ENCODE measurements at regions of chr17 and their contacts with region 1.

Region 1: GRCh38 chr17:27793168-27793905 is 7.0 kb downstream of the NOS2 start:
- DNase-seq: no peak
- ATAC-seq: no peak
- H3K4me3 ChIP-seq: no peak overlapping the region
- H3K27ac ChIP-seq: no peak overlapping the region
- H3K4me1 ChIP-seq: peaks cover 0 to 11% of the 10 kb centered on the region in 2 experiments; a peak in 1 of 4 replicates
- H3K27me3 ChIP-seq: no peaks in the 10 kb centered on the region
- CTCF ChIP-seq: no peak
- POLR2A ChIP-seq: no peak
- RAD21 ChIP-seq: no peak

Region 2: GRCh38 chr17:27840688-27841087 is 47.4 kb after region 1 on chr17:
- CTCF ChIA-PET with region 1: no interaction called
- POLR2A ChIA-PET with region 1: no interaction called
- RAD21 ChIA-PET with region 1: no interaction called
- intact Hi-C with region 1: loop called (anchors 5 kb)
- DNase-seq: no peak
- ATAC-seq: no peak
- H3K4me3 ChIP-seq: no peak overlapping the region
- H3K27ac ChIP-seq: no peak overlapping the region
- H3K4me1 ChIP-seq: no peaks in the 10 kb centered on the region
- H3K27me3 ChIP-seq: no peaks in the 10 kb centered on the region
- CTCF ChIP-seq: no peak
- POLR2A ChIP-seq: no peak
- RAD21 ChIP-seq: no peak

Region 3: DNA sequence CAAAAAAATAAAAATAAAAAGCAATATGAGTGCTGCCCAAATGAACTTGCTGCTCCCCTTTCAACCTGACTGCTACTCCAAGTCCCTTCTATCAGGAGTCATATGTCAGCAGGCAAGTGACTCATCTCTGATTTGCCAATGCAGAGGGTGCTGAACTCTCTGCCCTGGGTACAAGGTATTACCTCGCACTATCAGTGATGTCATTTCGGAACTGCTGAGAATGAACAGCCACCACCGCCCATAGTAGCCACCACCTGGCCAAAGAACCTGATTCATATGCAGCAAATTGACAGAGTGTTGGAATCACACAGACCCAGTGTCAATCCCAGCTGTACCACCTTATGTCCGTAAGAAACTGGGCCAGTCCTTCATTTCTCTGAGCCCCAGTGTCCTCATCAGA is 68.7 kb after region 1 on chr17:
- CTCF ChIA-PET with region 1: no interaction called
- POLR2A ChIA-PET with region 1: no interaction called
- RAD21 ChIA-PET with region 1: no interaction called
- intact Hi-C with region 1: no loop called
- DNase-seq: no peak
- ATAC-seq: no peak
- H3K4me3 ChIP-seq: no peak overlapping the region
- H3K27ac ChIP-seq: no peak overlapping the region
- H3K4me1 ChIP-seq: no peaks in the 10 kb centered on the region
- H3K27me3 ChIP-seq: 0 out of 2 replicates have a peak, but pooled peaks cover 15% of the 10 kb centered on the region
- CTCF ChIP-seq: no peak
- POLR2A ChIP-seq: no peak
- RAD21 ChIP-seq: no peak

Region 4: GRCh38 chr17:27907976-27908558 is 114.7 kb after region 1 on chr17:
- CTCF ChIA-PET with region 1: no interaction called
- POLR2A ChIA-PET with region 1: no interaction called
- RAD21 ChIA-PET with region 1: no interaction called
- intact Hi-C with region 1: no loop called
- DNase-seq: no peak
- ATAC-seq: no peak
- H3K4me3 ChIP-seq: no peak overlapping the region
- H3K27ac ChIP-seq: no peak overlapping the region
- H3K4me1 ChIP-seq: no peaks in the 10 kb centered on the region
- H3K27me3 ChIP-seq: no peaks in the 10 kb centered on the region; the same call in 1 of the 2 replicates
- CTCF ChIP-seq: no peak
- POLR2A ChIP-seq: no peak
- RAD21 ChIP-seq: no peak